ENCODE measurements at regions of chr13 and their contacts with region 1.

Region 1: GRCh38 chr13:46160471-46161066 is 21.4 kb downstream of the LCP1 start:
- DNase-seq: peak; percentile 11
- H3K4me3 ChIP-seq: no peak overlapping the region
- H3K27ac ChIP-seq: no peak overlapping the region
- H3K27me3 ChIP-seq: peaks cover 8% of the 10 kb centered on the region
- CTCF ChIP-seq: peak; percentile 79

Region 2: GRCh38 chr13:45623515-45624090 is 537.0 kb before region 1 on chr13:
- CTCF ChIA-PET with region 1: interaction called, 22 read pairs
- POLR2A ChIA-PET with region 1: no interaction called
- DNase-seq: no peak
- H3K4me3 ChIP-seq: no peak overlapping the region
- H3K27ac ChIP-seq: no peak overlapping the region
- H3K27me3 ChIP-seq: peaks cover 8% of the 10 kb centered on the region
- CTCF ChIP-seq: peak; percentile 59

Region 3: GRCh38 chr13:46126552-46127357 is 33.8 kb before region 1 on chr13:
- CTCF ChIA-PET with region 1: interaction called, 11 read pairs
- POLR2A ChIA-PET with region 1: no interaction called
- DNase-seq: peak; percentile 43
- H3K4me3 ChIP-seq: no peak overlapping the region
- H3K27ac ChIP-seq: no peak overlapping the region
- H3K27me3 ChIP-seq: peaks cover 11% of the 10 kb centered on the region
- CTCF ChIP-seq: peak; percentile 95

Region 4: DNA sequence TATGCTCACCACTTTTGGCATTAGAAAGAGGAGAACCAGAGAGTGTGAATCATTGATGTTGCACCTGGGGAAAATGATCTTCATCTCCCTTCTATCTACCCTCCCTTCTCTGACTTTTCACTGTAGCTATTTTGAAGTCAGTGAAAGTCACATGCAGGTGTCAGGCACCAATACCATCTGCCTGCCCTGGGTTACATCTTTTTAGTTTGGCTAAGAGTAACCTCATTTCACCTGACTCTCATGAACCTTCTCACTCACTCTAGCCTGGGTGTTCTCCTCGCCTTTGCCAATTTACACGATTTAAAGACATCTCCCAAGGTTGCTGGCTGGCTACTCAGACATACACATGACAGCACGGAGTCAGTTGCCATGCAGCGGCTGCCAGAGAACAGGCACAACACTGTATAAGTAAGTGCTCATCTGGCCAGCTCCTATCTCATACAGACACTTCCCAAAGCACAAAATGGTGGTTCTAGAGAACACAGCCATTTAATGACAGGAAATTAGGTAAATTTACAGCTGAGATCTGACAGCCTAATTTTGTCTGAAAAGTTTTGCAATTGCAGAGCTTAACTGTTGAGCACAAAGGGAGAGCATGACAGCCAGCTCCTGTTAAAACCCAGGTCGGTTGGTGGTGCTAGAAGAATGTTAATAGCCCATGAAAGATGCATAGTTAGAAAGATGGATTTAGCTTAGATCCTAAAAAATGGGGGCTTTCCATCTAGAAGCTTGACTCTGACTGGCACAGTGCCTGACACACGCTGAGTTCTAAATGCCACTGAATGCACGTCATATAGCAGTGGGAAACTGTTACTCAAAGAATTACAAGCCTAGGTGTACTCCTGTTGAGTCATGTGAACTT is 11.1 kb before region 1 on chr13:
- CTCF ChIA-PET with region 1: interaction called, 30 read pairs
- POLR2A ChIA-PET with region 1: no interaction called
- DNase-seq: no peak
- H3K4me3 ChIP-seq: no peak overlapping the region
- H3K27ac ChIP-seq: no peak overlapping the region
- H3K27me3 ChIP-seq: peaks cover 6% of the 10 kb centered on the region
- CTCF ChIP-seq: no peak

Region 5: DNA sequence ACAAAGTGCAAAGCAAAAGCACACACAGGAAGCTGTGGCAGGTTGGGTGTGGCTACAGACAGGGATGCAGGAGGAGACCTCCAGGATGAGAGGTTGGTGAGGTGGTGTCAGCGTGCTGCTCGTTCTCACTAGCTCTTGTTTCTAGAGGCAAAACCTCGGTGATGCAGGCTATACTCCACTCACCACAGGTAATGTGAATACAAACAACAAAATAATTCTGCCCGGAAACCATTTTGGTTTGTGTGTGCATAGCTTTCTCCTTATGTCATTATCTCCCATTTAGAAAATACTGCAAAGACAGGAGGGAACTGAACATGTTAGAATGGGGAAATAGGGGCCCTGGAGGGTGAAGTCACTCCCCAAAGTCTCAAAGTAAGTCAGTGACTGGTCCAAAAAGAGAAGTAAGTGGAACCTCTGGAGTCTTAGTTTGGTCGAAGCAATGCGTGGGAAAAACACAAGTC is 12.0 kb after region 1 on chr13:
- CTCF ChIA-PET with region 1: interaction called, 20 read pairs
- POLR2A ChIA-PET with region 1: no interaction called
- DNase-seq: no peak
- H3K4me3 ChIP-seq: no peak overlapping the region
- H3K27ac ChIP-seq: no peak overlapping the region
- H3K27me3 ChIP-seq: no peaks in the 10 kb centered on the region
- CTCF ChIP-seq: no peak

Measured in AG04450 (cell line).